Panc1 (cell line): ENCODE measurements at regions of chrX and their contacts with region 1.

Region 1: GRCh38 chrX:136115126-136115903 is 32.0 kb upstream of the FHL1 start:
- DNase-seq: no peak
- ATAC-seq: no peak
- H3K4me3 ChIP-seq: no peak overlapping the region
- H3K27ac ChIP-seq: no peak overlapping the region
- H3K4me1 ChIP-seq: no peaks in the 10 kb centered on the region
- H3K27me3 ChIP-seq: no peaks in the 10 kb centered on the region
- CTCF ChIP-seq: no peak

Region 2: GRCh38 chrX:136130931-136131833 is 15.9 kb after region 1 on chrX:
- CTCF ChIA-PET with region 1: no interaction called
- POLR2A ChIA-PET with region 1: interaction called, 12 read pairs
- in situ Hi-C with region 1: no loop called
- intact Hi-C with region 1: no loop called
- DNase-seq: peak; percentile 35
- ATAC-seq: peak; percentile 94
- H3K4me3 ChIP-seq: no peak overlapping the region
- H3K27ac ChIP-seq: no peak overlapping the region
- H3K4me1 ChIP-seq: 0 out of 2 replicates have a peak, but pooled peaks cover 3% of the 10 kb centered on the region
- H3K27me3 ChIP-seq: no peaks in the 10 kb centered on the region
- CTCF ChIP-seq: no peak